MCF 10A (cell line): ENCODE measurements at regions of chr14 and their contacts with region 1.

Region 1: GRCh38 chr14:100900837-100901390 is 2.6 kb downstream of the RTL1 start:
- DNase-seq: peak; percentile 35
- H3K4me3 Mint-ChIP-seq: no peak overlapping the region
- H3K27ac Mint-ChIP-seq: no peak overlapping the region
- H3K4me1 Mint-ChIP-seq: peaks cover 5% of the 10 kb centered on the region
- H3K27me3 Mint-ChIP-seq: peaks cover 92% of the 10 kb centered on the region
- CTCF ChIP-seq: peak; percentile 40

Region 2: DNA sequence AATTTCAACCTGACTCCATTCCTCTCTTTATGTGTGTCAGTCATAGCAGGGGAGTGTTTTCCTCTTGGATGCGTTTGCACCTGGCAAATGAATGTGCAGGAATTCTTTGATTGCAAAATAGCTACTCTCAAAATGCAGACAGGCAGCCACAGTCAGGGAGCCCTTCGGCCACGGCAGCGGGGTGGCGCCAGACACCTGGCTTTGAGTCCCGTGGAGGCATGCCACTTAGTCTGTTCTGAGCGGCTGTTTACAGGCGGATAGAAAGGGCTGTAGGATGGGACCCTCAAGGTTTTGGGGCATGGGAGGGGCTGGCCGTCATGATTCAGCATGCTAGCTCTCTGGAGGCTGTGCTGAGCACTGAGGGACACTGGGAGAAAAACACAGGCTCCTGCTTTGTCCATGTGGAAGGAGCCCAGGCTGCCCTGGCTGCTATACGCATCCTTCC is 460.7 kb before region 1 on chr14:
- CTCF ChIA-PET with region 1: no interaction called
- POLR2A ChIA-PET with region 1: no interaction called
- intact Hi-C with region 1: loop called (anchors 2 kb)
- DNase-seq: peak; percentile 89
- H3K4me3 Mint-ChIP-seq: peak overlapping the region; percentile 48
- H3K27ac Mint-ChIP-seq: peak overlapping the region; percentile 87
- H3K4me1 Mint-ChIP-seq: peaks cover 23% of the 10 kb centered on the region
- H3K27me3 Mint-ChIP-seq: no peaks in the 10 kb centered on the region
- CTCF ChIP-seq: peak; percentile 85

Region 3: GRCh38 chr14:100662879-100663760 is 237.8 kb before region 1 on chr14:
- CTCF ChIA-PET with region 1: no interaction called
- POLR2A ChIA-PET with region 1: no interaction called
- intact Hi-C with region 1: loop called (anchors 2 kb)
- DNase-seq: peak; percentile 76
- H3K4me3 Mint-ChIP-seq: no peak overlapping the region
- H3K27ac Mint-ChIP-seq: no peak overlapping the region
- H3K4me1 Mint-ChIP-seq: peaks cover 9% of the 10 kb centered on the region
- H3K27me3 Mint-ChIP-seq: no peaks in the 10 kb centered on the region
- CTCF ChIP-seq: peak; percentile 92

Region 4: DNA sequence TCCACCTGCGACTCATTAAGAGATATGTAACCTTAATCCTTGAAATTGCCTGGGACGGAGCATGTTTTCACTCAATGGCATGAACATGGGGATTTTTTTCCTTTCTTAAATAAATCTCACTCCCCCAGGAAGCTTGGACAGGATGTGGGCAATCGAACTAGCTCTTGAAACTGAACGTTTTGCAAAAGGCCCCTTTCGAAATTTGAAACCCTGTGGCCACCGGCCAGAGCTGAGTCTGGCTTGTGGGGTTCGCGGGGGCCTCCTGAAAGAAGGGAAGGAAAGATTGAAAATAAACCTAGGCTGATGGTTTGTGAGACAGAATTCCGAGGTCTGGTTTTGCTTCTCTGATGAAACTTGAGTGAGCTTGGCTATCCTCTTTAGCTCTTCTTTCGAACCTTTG is 104.0 kb after region 1 on chr14:
- CTCF ChIA-PET with region 1: no interaction called
- POLR2A ChIA-PET with region 1: no interaction called
- intact Hi-C with region 1: no loop called
- DNase-seq: no peak
- H3K4me3 Mint-ChIP-seq: no peak overlapping the region
- H3K27ac Mint-ChIP-seq: no peak overlapping the region
- H3K4me1 Mint-ChIP-seq: peaks cover 14% of the 10 kb centered on the region
- H3K27me3 Mint-ChIP-seq: no peaks in the 10 kb centered on the region
- CTCF ChIP-seq: no peak

Region 5: GRCh38 chr14:101072945-101073597 is 172.2 kb after region 1 on chr14:
- CTCF ChIA-PET with region 1: no interaction called
- POLR2A ChIA-PET with region 1: no interaction called
- intact Hi-C with region 1: loop called (anchors 5 kb)
- DNase-seq: peak; percentile 98
- H3K4me3 Mint-ChIP-seq: peak overlapping the region; percentile 40
- H3K27ac Mint-ChIP-seq: no peak overlapping the region
- H3K4me1 Mint-ChIP-seq: peaks cover 11% of the 10 kb centered on the region
- H3K27me3 Mint-ChIP-seq: no peaks in the 10 kb centered on the region
- CTCF ChIP-seq: no peak

Region 6: GRCh38 chr14:101665515-101666078 is 764.7 kb after region 1 on chr14:
- CTCF ChIA-PET with region 1: no interaction called
- POLR2A ChIA-PET with region 1: no interaction called
- intact Hi-C with region 1: loop called (anchors 5 kb)
- DNase-seq: peak; percentile 64
- H3K4me3 Mint-ChIP-seq: no peak overlapping the region
- H3K27ac Mint-ChIP-seq: no peak overlapping the region
- H3K4me1 Mint-ChIP-seq: no peaks in the 10 kb centered on the region
- H3K27me3 Mint-ChIP-seq: peaks cover 90% of the 10 kb centered on the region
- CTCF ChIP-seq: peak; percentile 58